PC-3 (cell line): ENCODE measurements at regions of chr2 and their contacts with region 1.

Region 1: GRCh38 chr2:61328707-61329251 is 142.1 kb downstream of the USP34 start:
- DNase-seq: peak; percentile 90
- ATAC-seq: peak; percentile 99
- H3K4me3 ChIP-seq: no peak overlapping the region
- H3K27ac ChIP-seq: peak overlapping the region; percentile 43
- H3K4me1 ChIP-seq: peaks cover 10% of the 10 kb centered on the region
- H3K27me3 ChIP-seq: no peaks in the 10 kb centered on the region
- CTCF ChIP-seq: no peak

Region 2: DNA sequence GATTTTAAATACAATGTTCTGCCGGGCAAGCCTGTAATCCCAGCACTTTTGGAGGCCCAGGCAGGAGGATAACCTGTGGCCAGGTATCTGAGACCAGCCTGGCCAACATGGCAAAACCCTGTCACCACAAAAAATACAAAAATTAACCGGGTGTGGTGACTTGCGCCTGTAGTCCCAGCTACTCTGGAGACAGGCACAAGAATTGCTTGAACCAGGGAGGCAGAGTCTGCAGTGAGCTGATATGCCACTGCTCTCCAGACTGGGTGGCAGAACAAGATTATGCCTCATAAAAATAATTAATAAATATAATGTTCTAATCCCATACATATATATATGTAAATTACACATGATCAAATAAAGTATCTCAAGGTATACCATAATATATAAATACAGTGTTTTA is 47.5 kb before region 1 on chr2:
- CTCF ChIA-PET with region 1: no interaction called
- POLR2A ChIA-PET with region 1: no interaction called
- intact Hi-C with region 1: loop called (anchors 5 kb)
- DNase-seq: no peak
- ATAC-seq: no peak
- H3K4me3 ChIP-seq: no peak overlapping the region
- H3K27ac ChIP-seq: no peak overlapping the region
- H3K4me1 ChIP-seq: peaks cover 9% of the 10 kb centered on the region; the same call in 1 of the 2 replicates
- H3K27me3 ChIP-seq: no peaks in the 10 kb centered on the region
- CTCF ChIP-seq: no peak